Mammary epithelial cell (primary cell): ENCODE measurements at regions of chr14 and their contacts with region 1.

Region 1: GRCh38 chr14:100454437-100454836 is 131.3 kb downstream of the SLC25A47 start:
- DNase-seq: no peak
- H3K4me3 ChIP-seq: no peak overlapping the region
- H3K27ac ChIP-seq: no peak overlapping the region
- H3K4me1 ChIP-seq: peaks cover 6% of the 10 kb centered on the region
- H3K27me3 ChIP-seq: no peaks in the 10 kb centered on the region
- CTCF ChIP-seq: no peak

Region 2: DNA sequence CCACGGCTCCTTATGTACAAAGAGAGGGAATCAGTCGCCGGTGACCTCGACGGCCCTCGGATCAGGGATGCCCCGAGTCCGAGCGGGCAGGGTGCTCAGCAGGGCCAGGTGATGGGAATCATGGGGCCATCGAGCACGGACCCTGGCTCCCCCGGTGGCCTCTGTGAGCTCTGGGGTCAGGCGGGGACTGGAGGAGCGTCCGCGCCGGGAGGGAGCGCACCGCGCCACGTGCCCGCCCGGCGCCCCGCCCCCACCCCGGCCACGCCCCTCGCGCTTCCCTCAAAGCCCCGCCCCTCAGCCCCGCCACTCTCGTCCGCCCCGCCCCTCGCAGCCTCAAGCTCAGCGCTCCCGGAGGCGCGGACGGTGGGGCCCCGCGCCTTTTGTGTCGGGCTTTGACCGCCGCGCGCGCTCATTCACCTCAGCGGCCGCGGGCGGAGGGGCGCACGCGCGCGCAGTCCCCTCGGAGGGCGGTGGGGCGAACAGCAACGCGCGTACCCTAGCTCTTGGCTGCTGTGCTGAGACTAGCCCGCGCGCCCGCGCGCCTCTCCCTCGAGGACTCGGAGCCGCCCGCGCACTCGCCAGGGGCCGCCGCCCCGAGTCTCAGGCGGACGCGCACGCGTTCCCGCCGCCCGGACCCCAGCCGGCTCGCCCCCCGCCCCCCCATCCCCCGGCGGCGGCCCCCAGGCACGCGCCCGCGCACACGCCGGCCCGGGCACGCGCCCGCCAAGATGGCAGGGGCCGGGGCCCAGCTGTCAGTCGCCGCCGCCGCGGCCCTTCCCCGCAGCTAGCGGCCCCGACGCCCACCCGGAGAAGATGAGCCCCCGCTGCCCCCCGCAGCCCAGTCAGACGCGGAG is 483.1 kb before region 1 on chr14:
- CTCF ChIA-PET with region 1: no interaction called
- dilution Hi-C with region 1: no loop called
- in situ Hi-C with region 1: no loop called
- intact Hi-C with region 1: no loop called
- DNase-seq: peak; percentile 78
- H3K4me3 ChIP-seq: peak overlapping the region; percentile 54 to 82 (median 82)
- H3K27ac ChIP-seq: no peak overlapping the region
- H3K4me1 ChIP-seq: peaks cover 2% of the 10 kb centered on the region
- H3K27me3 ChIP-seq: no peaks in the 10 kb centered on the region
- CTCF ChIP-seq: no peak

Region 3: GRCh38 chr14:100372357-100373048 is 81.9 kb before region 1 on chr14:
- CTCF ChIA-PET with region 1: no interaction called
- dilution Hi-C with region 1: no loop called
- in situ Hi-C with region 1: no loop called
- intact Hi-C with region 1: no loop called
- DNase-seq: no peak
- H3K4me3 ChIP-seq: no peak overlapping the region
- H3K27ac ChIP-seq: no peak overlapping the region
- H3K4me1 ChIP-seq: peaks cover 16% of the 10 kb centered on the region
- H3K27me3 ChIP-seq: no peaks in the 10 kb centered on the region
- CTCF ChIP-seq: no peak

Region 4: GRCh38 chr14:100486025-100486828 is 31.8 kb after region 1 on chr14:
- CTCF ChIA-PET with region 1: no interaction called
- dilution Hi-C with region 1: loop called (anchors 5 kb)
- in situ Hi-C with region 1: no loop called
- intact Hi-C with region 1: no loop called
- DNase-seq: peak; percentile 39
- H3K4me3 ChIP-seq: no peak overlapping the region
- H3K27ac ChIP-seq: no peak overlapping the region
- H3K4me1 ChIP-seq: no peaks in the 10 kb centered on the region
- H3K27me3 ChIP-seq: no peaks in the 10 kb centered on the region
- CTCF ChIP-seq: no peak

Region 5: DNA sequence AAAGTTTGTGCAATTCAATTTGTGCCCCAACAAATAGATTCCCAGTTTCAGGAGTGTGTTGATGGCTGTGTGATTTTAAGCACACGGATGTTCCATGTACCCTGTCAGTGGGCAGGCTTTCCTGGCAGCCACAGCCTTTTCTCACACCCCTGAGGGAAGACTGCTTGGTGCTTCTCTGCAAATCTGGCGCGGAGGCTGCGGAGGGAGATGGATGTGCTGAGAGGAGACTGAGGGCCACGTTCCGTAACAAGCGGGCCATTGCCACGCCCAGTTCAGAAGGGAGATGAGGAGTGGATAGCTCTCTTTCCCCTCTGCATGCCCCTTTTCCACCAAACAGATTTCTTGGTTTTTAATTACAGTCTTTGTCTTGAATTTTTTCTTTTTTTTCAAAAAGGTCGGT is 43.6 kb after region 1 on chr14:
- CTCF ChIA-PET with region 1: no interaction called
- dilution Hi-C with region 1: no loop called
- in situ Hi-C with region 1: no loop called
- intact Hi-C with region 1: no loop called
- DNase-seq: no peak
- H3K4me3 ChIP-seq: no peak overlapping the region
- H3K27ac ChIP-seq: no peak overlapping the region
- H3K4me1 ChIP-seq: no peaks in the 10 kb centered on the region
- H3K27me3 ChIP-seq: no peaks in the 10 kb centered on the region
- CTCF ChIP-seq: no peak

Region 6: GRCh38 chr14:100533656-100534485 is 79.4 kb after region 1 on chr14:
- CTCF ChIA-PET with region 1: no interaction called
- dilution Hi-C with region 1: loop called (anchors 5 kb)
- in situ Hi-C with region 1: no loop called
- intact Hi-C with region 1: no loop called
- DNase-seq: no peak
- H3K4me3 ChIP-seq: no peak overlapping the region
- H3K27ac ChIP-seq: no peak overlapping the region
- H3K4me1 ChIP-seq: peaks cover 25% of the 10 kb centered on the region
- H3K27me3 ChIP-seq: no peaks in the 10 kb centered on the region
- CTCF ChIP-seq: no peak